Activated CD4-positive, alpha-beta memory T cell treated with anti-CD3 and anti-CD28 coated beads for 36 hours (primary cell): ENCODE measurements at regions of chr9 and their contacts with region 1.

Region 1: GRCh38 chr9:88835038-88835466 is 156.2 kb upstream of the S1PR3 start:
- DNase-seq: no peak
- H3K4me3 Mint-ChIP-seq: no peak overlapping the region
- H3K27ac Mint-ChIP-seq: no peak overlapping the region
- H3K4me1 Mint-ChIP-seq: peaks cover 20% of the 10 kb centered on the region
- H3K27me3 Mint-ChIP-seq: peaks cover 68% of the 10 kb centered on the region

Region 2: GRCh38 chr9:88388172-88388885 is 446.7 kb before region 1 on chr9 and contains the start of gene SPIN1:
- CTCF ChIA-PET with region 1: no interaction called
- POLR2A ChIA-PET with region 1: no interaction called
- intact Hi-C with region 1: no loop called
- DNase-seq: peak; percentile 88
- H3K4me3 Mint-ChIP-seq: peak within 1 kb of the TSS; percentile 91
- H3K27ac Mint-ChIP-seq: peak within 1 kb of the TSS; percentile 97
- H3K4me1 Mint-ChIP-seq: peaks cover 28% of the 10 kb centered on the region
- H3K27me3 Mint-ChIP-seq: no peaks in the 10 kb centered on the region
- total RNA-seq, gene SPIN1: 19.6 to 20.8 TPM

Region 3: GRCh38 chr9:88922031-88922430 is 87.0 kb after region 1 on chr9:
- CTCF ChIA-PET with region 1: no interaction called
- POLR2A ChIA-PET with region 1: no interaction called
- intact Hi-C with region 1: loop called (anchors 2 kb)
- DNase-seq: peak; percentile 64
- H3K4me3 Mint-ChIP-seq: no peak overlapping the region
- H3K27ac Mint-ChIP-seq: no peak overlapping the region
- H3K4me1 Mint-ChIP-seq: peaks cover 40% of the 10 kb centered on the region
- H3K27me3 Mint-ChIP-seq: peaks cover 8% of the 10 kb centered on the region